ENCODE measurements at regions of chrX and their contacts with region 1.

Region 1: DNA sequence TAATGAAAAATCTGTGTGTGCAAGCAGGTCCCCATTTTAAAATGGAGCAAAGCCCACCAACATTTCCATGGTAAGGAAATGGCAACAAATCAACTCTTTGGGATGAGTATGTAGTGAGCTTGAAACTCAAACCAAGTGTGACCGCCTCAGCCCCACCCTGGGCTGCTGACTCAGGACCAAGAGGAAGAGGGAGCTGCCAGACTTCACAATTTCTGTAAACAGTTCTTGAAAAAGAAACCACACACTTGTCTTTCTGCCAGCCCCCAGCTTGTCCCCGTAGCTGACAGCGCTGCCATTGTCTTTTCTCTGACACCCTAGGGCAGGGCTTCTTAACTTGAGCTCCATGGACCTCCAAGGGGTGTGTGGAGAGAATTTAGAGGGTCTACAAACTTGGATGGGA is 10.3 kb downstream of the RTL5 start:
- DNase-seq: peak; percentile 87
- H3K4me3 ChIP-seq: no peak overlapping the region
- H3K27ac ChIP-seq: peak overlapping the region; percentile 67 to 78 (median 76)
- H3K4me1 ChIP-seq: peaks cover 0 to 55% (median 40%) of the 10 kb centered on the region in 4 donors
- H3K27me3 ChIP-seq: no peaks in the 10 kb centered on the region
- CTCF ChIP-seq: no peak
- EP300 ChIP-seq: no peak
- POLR2A ChIP-seq: no peak

Region 2: DNA sequence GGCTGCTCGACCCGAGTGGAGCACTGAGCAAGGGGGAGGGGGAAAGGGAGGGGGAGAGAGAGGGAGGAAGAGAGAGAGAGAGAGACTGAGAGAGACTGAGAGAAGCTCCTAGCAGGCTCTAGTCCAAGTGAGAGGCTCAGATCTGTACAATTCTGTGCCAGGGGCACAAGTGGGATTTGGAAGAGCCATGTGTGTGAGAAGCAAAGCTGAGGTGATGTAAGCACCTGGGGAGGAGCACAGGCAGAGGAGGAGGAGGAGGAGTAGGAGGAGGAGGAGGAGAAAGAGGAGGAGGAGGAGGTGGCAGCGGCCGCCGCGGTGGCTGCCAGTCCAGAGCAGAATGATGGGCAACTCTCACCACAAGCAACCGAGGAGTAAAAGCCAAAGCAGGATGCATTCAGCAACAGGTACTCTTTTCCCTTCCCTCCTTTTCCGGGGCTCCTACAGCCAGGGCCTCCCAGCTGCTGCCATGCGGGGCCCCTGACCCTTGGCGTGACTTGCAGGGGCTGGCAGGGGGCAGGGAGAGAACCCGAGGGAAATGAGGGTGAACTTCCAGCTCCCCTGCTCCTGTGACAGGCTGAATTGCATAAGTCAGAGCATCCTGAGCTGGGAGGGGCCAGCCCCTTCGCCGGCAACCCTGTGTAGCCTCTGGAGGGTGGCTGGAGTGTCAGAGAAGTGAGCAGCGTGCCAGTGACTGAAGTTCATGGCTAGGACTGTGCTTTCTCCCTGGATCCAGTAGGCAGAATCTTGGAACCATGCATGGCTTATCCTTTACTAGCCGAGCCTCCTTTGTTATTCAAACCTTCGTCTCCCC is 51.8 kb before region 1 on chrX:
- intact Hi-C with region 1: loop called (anchors 5 kb)
- DNase-seq: peak; percentile 74
- H3K4me3 ChIP-seq: peak overlapping the region in 3 of 4 donors; percentile 29 to 32 (median 29)
- H3K27ac ChIP-seq: peak overlapping the region; percentile 42 to 79 (median 70)
- H3K4me1 ChIP-seq: peaks cover 0 to 38% (median 17%) of the 10 kb centered on the region in 4 donors
- H3K27me3 ChIP-seq: no peaks in the 10 kb centered on the region
- CTCF ChIP-seq: no peak
- EP300 ChIP-seq: no peak
- POLR2A ChIP-seq: no peak

Measured in sigmoid colon (tissue), 7 donors.